GM10248 (cell line): ENCODE measurements at regions of chr2 and their contacts with region 1.

Region 1: DNA sequence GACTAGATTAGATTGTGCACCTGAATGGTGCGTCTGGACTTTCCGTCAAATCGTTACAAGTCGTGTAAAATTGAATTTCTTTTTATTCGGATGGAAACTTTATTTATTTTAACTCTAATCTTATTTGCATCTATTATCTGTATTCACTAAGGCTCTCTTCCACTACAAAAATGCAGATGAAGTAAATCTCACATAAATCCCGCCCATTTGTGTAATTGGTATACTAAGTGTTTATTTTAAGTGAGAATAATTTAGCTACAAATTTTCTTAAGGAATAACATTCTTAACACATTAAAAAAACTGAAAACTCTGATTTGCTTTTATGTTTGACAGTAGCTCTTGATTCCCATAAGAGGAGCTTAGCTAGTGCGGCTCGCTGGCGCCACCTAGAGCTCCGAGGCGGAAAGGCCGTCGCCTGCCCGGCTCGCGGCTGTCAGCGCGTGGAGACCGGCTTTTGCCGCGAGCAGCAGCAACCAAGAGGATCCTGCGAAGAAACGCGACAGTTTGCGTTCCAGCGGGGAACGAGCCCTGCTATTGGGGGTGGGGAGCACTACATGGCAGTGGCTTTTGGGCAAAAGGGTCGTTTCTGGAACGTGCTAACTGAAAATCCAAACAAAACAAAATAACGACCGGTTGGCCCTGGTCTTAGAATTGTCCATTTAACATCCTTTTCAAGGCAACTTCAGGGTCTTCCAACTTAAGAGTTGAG is 6.7 kb downstream of the SP9 start:
- DNase-seq: peak; percentile 84
- CTCF ChIP-seq: peak; percentile 98

Region 2: GRCh38 chr2:174158003-174158402 is 183.4 kb before region 1 on chr2:
- CTCF ChIA-PET with region 1: interaction called, 17 read pairs
- POLR2A ChIA-PET with region 1: no interaction called
- DNase-seq: peak; percentile 38
- CTCF ChIP-seq: peak; percentile 54

Region 3: DNA sequence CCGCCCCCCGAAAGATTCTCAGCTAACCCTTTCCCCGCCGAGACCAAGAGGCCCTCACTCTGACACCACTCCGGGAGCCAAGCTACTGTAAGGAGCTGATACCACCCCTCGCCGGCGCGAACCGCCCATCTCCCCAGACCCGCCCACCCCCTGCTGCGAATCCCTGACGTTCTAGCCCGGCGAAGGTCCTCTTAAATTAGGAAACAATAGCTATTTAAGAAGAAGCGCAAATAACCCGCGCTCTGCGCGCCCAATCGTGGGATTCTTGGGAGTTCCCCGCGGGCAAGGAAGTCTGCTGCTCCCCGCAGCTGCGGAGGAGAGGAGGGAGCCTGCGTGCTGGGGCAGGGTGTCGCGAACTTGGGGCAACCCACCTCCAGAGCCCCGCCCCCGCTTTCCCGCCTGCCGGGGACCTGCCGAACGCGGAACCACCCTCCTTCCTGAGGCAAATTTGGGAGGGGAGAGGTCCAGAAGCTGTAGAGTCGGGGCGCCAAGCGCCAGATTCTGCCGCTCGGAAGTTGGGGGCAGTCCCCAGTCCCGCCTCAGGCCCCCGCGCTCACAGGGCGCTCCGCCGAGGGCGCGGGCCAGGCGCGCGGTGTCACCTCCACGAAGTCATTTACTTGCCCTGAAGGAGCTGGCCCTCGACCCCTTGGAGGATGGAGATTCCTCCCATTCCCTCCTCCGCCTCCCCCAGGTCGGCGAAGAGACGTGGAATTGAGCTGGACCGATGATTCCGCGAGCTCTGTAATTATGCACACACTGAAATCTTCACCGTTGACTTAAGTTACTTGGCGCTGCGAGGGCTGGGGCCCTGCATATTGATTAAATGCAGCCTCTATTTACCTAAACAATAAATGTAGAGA is 15.0 kb before region 1 on chr2:
- CTCF ChIA-PET with region 1: interaction called, 21 read pairs
- POLR2A ChIA-PET with region 1: no interaction called
- DNase-seq: no peak
- CTCF ChIP-seq: no peak

Region 4: GRCh38 chr2:174356347-174356746 is 14.9 kb after region 1 on chr2:
- CTCF ChIA-PET with region 1: interaction called, 17 read pairs
- POLR2A ChIA-PET with region 1: no interaction called
- DNase-seq: no peak
- CTCF ChIP-seq: no peak